Natural killer cell (primary cell): ENCODE measurements at regions of chr3 and their contacts with region 1.

Region 1: GRCh38 chr3:143302638-143303171 is 183.1 kb downstream of the CHST2 start:
- DNase-seq: no peak
- ATAC-seq: no peak
- H3K4me3 ChIP-seq: no peak overlapping the region
- H3K4me3 Mint-ChIP-seq: peak overlapping the region; percentile 83
- H3K27ac ChIP-seq: no peak overlapping the region
- H3K27ac Mint-ChIP-seq: peak overlapping the region; percentile 80 to 84
- H3K4me1 ChIP-seq: peaks cover 58% of the 10 kb centered on the region
- H3K4me1 Mint-ChIP-seq: peaks cover 89 to 92% of the 10 kb centered on the region in 2 donors
- H3K27me3 ChIP-seq: no peaks in the 10 kb centered on the region
- H3K27me3 Mint-ChIP-seq: no peaks in the 10 kb centered on the region
- CTCF ChIP-seq: no peak

Region 2: GRCh38 chr3:143171141-143171970 is 131.3 kb before region 1 on chr3:
- intact Hi-C with region 1: loop called (anchors 5 kb)
- DNase-seq: peak in 1 of 2 donors; percentile 55
- ATAC-seq: peak; percentile 50 to 78 (median 71)
- H3K4me3 ChIP-seq: no peak overlapping the region
- H3K4me3 Mint-ChIP-seq: peak overlapping the region; percentile 84
- H3K27ac ChIP-seq: peak overlapping the region; percentile 78
- H3K27ac Mint-ChIP-seq: peak overlapping the region; percentile 93 to 96
- H3K4me1 ChIP-seq: peaks cover 53% of the 10 kb centered on the region
- H3K4me1 Mint-ChIP-seq: peaks cover 88 to 91% of the 10 kb centered on the region in 2 donors
- H3K27me3 ChIP-seq: no peaks in the 10 kb centered on the region
- H3K27me3 Mint-ChIP-seq: no peaks in the 10 kb centered on the region
- CTCF ChIP-seq: no peak

Region 3: DNA sequence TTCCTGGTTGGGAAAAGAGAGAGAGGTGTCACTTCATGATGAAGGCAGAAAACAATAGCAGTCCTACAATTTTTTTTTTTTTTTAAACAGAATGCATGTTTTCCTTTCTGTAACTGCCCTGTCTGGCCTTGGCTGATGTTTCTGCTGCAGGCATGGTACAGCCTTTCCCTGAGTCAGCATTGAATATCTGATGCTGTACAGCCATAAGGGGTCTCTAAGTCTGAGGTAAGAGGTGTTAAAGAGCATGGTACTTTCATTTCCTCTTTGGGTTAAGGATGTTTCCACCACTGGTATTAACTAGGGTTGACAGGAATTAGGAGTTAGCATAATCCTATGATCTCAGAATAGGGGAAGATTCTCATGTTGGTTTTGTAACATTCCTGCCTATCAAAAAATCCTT is 35.8 kb before region 1 on chr3:
- intact Hi-C with region 1: loop called (anchors 5 kb)
- DNase-seq: no peak
- ATAC-seq: peak in 2 of 3 donors; percentile 63 to 78
- H3K4me3 ChIP-seq: no peak overlapping the region
- H3K4me3 Mint-ChIP-seq: peak overlapping the region; percentile 59
- H3K27ac ChIP-seq: no peak overlapping the region
- H3K27ac Mint-ChIP-seq: peak overlapping the region; percentile 68 to 73
- H3K4me1 ChIP-seq: peaks cover 24% of the 10 kb centered on the region
- H3K4me1 Mint-ChIP-seq: peaks cover 44 to 65% of the 10 kb centered on the region in 2 donors
- H3K27me3 ChIP-seq: no peaks in the 10 kb centered on the region
- H3K27me3 Mint-ChIP-seq: no peaks in the 10 kb centered on the region
- CTCF ChIP-seq: no peak

Region 4: DNA sequence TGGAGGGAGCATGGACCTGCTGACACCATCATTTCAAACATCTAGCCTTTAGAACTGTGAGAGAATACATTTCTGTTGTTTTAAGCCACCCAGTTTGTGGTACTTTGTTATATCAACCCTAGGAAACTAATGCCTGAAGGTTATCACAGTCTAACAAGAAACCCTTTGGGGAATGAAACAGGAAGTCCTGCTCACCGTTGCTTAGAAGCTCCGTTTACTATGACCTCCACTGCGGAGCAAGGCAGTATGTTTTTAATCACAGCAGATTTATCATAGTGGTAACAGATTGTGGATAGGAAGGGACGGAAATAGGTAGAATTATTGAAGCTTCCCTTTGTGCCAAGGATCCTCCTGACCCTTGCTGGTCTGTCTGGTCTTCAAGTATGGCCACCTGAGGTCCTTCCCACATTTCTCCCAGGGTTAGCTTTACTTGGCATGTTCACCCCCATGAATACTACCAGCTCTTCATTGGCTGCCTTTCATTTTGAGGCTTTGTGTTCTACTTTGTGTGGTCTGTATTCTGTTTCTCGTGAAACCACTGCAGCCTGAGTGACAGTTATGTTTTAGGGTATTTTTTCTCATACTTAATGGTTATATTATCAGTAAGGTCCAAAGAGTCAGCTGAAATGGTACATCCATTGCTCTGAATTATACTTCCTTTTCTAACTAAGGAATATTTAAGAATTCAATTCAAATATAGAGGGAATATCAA is 18.5 kb after region 1 on chr3:
- intact Hi-C with region 1: loop called (anchors 2 kb)
- DNase-seq: no peak
- ATAC-seq: peak; percentile 62 to 87 (median 83)
- H3K4me3 ChIP-seq: no peak overlapping the region
- H3K4me3 Mint-ChIP-seq: peak overlapping the region; percentile 74
- H3K27ac ChIP-seq: peak overlapping the region; percentile 75
- H3K27ac Mint-ChIP-seq: peak overlapping the region; percentile 82 to 88
- H3K4me1 ChIP-seq: peaks cover 23% of the 10 kb centered on the region
- H3K4me1 Mint-ChIP-seq: peaks cover 55 to 57% of the 10 kb centered on the region in 2 donors
- H3K27me3 ChIP-seq: no peaks in the 10 kb centered on the region
- H3K27me3 Mint-ChIP-seq: no peaks in the 10 kb centered on the region
- CTCF ChIP-seq: no peak

Region 5: GRCh38 chr3:143450632-143451031 is 147.9 kb after region 1 on chr3:
- intact Hi-C with region 1: loop called (anchors 5 kb)
- DNase-seq: no peak
- ATAC-seq: peak in 1 of 3 donors; percentile 9
- H3K4me3 ChIP-seq: no peak overlapping the region
- H3K4me3 Mint-ChIP-seq: no peak overlapping the region
- H3K27ac ChIP-seq: no peak overlapping the region
- H3K27ac Mint-ChIP-seq: peak overlapping the region; percentile 41 to 65
- H3K4me1 ChIP-seq: no peaks in the 10 kb centered on the region
- H3K4me1 Mint-ChIP-seq: peaks cover 6 to 23% of the 10 kb centered on the region in 2 donors
- H3K27me3 ChIP-seq: no peaks in the 10 kb centered on the region
- H3K27me3 Mint-ChIP-seq: no peaks in the 10 kb centered on the region
- CTCF ChIP-seq: no peak